ENCODE measurements at regions of chr15 and their contacts with region 1.

Region 1: GRCh38 chr15:99104788-99105513 is at the start of gene SYNM:
- DNase-seq: peak; percentile 73 to 86 (median 77)
- H3K4me3 ChIP-seq: peak within 1 kb of the TSS; percentile 47
- H3K27ac ChIP-seq: peak within 1 kb of the TSS; percentile 65 to 78
- H3K4me1 ChIP-seq: peaks cover 3% of the 10 kb centered on the region
- H3K27me3 ChIP-seq: no peaks in the 10 kb centered on the region
- CTCF ChIP-seq: peak; percentile 66 to 84 (median 79)
- EP300 ChIP-seq: no peak
- POLR2A ChIP-seq: peak; percentile 52
- total RNA-seq, gene SYNM: 4.5 to 54.0 (median 14.9) TPM

Region 2: DNA sequence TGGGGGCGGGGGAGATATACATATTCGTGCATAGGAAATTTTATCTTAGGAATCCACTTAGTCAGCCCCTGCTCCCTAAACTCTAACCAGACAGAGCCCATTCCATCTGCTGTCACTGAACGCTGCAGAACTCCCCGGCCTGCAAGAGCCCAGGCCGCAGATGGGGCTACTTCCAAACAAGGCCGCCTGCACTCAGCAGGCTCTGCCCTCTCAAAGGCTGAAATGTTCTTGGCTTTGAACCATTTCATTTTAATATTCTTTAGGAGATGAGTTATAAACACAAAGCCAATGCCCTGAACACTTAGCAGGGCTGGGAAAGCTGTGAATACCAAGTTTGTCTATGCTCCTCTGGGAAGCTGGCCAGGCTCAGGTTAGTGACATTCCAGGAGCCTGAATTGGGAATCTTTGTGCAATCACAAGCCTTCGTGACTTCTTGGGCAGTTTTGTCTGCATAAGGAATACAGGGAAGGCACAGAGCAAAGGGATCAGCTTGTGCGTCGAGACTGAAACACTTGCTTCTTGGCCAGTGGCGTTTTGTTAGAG is 64.9 kb after region 1 on chr15:
- intact Hi-C with region 1: loop called in 1 of 4 experiments (anchors 5 kb)
- DNase-seq: peak in 3 of 5 donors; percentile 28 to 42 (median 41)
- H3K4me3 ChIP-seq: no peak overlapping the region
- H3K27ac ChIP-seq: peak overlapping the region in 1 of 2 donors; percentile 28
- H3K4me1 ChIP-seq: peaks cover under 1% of the 10 kb centered on the region
- H3K27me3 ChIP-seq: no peaks in the 10 kb centered on the region
- CTCF ChIP-seq: no peak
- EP300 ChIP-seq: no peak
- POLR2A ChIP-seq: no peak

Region 3: DNA sequence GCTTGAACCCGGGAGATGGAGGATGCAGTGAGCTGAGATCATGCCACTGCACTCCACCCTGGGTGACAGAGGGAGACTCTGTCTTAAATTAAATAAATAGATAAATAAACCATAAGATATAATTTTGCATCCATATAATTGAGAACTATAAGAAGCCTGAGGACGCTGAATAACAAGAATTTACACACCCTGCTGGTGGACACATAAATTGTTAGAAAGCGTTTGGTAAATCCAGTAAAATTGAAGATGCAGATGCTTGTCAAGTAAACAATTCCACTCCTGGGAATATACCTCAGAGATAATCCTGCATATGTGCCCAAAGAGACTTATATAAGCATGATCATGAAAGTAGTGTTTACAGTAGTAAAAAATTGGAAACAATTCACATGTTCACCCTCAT is 102.7 kb after region 1 on chr15:
- intact Hi-C with region 1: loop called in 3 of 4 experiments (anchors 2 to 10 kb)
- DNase-seq: no peak
- H3K4me3 ChIP-seq: no peak overlapping the region
- H3K27ac ChIP-seq: no peak overlapping the region
- H3K4me1 ChIP-seq: no peaks in the 10 kb centered on the region
- H3K27me3 ChIP-seq: no peaks in the 10 kb centered on the region
- CTCF ChIP-seq: no peak
- EP300 ChIP-seq: no peak
- POLR2A ChIP-seq: no peak

Region 4: DNA sequence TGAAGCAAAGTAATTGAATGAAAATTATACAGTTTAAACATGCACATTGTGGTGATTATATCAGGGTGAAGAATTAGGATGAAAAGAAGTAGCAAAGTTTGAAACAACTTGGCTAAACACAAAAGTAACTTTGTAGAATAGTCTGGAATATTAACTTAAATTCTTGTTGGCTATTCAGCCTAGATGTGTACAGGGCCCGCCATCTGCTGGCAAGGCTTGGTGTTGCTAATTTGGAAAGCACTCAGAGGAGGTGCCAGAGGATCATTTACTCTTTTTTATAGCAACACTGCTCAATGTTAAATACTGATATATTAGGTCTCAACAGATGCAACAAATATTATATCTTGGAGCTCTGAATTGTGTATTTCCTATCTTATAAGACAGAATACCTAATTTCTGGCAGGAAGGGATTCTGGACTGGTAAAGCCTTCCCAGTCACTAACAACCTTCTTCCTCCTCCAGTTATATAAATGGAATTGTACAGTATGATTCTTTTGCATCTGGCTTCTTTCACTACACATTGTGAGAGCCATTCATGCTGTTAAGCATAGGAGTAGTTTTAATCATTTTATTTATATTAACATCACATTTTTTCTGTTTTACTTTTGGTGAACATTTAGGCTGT is 108.3 kb after region 1 on chr15:
- intact Hi-C with region 1: loop called in 3 of 4 experiments (anchors 2 to 10 kb)
- DNase-seq: peak; percentile 74 to 88 (median 85)
- H3K4me3 ChIP-seq: no peak overlapping the region
- H3K27ac ChIP-seq: no peak overlapping the region
- H3K4me1 ChIP-seq: no peaks in the 10 kb centered on the region
- H3K27me3 ChIP-seq: no peaks in the 10 kb centered on the region
- CTCF ChIP-seq: peak; percentile 78 to 80 (median 79)
- EP300 ChIP-seq: no peak
- POLR2A ChIP-seq: no peak